Gastrocnemius medialis (tissue), 4 donors: ENCODE measurements at regions of chr11 and their contacts with region 1.

Region 1: GRCh38 chr11:18395735-18396504 is 1.6 kb downstream of the LDHA start:
- DNase-seq: peak; percentile 94 to 97
- ATAC-seq: peak; percentile 70 to 83
- H3K4me3 ChIP-seq: peak overlapping the region; percentile 67 to 86 (median 74)
- H3K27ac ChIP-seq: peak overlapping the region; percentile 85 to 94 (median 93)
- H3K4me1 ChIP-seq: peaks cover 15 to 23% of the 10 kb centered on the region in 2 donors
- H3K27me3 ChIP-seq: no peaks in the 10 kb centered on the region
- CTCF ChIP-seq: no peak
- POLR2A ChIP-seq: peak; percentile 65 to 73

Region 2: GRCh38 chr11:18304745-18305144 is 91.2 kb before region 1 on chr11:
- in situ Hi-C with region 1: no loop called
- intact Hi-C with region 1: no loop called
- DNase-seq: no peak
- ATAC-seq: no peak
- H3K4me3 ChIP-seq: no peak overlapping the region
- H3K27ac ChIP-seq: no peak overlapping the region
- H3K4me1 ChIP-seq: no peaks in the 10 kb centered on the region
- H3K27me3 ChIP-seq: no peaks in the 10 kb centered on the region
- CTCF ChIP-seq: no peak
- POLR2A ChIP-seq: no peak

Region 3: GRCh38 chr11:18314784-18315523 is 81.0 kb before region 1 on chr11:
- in situ Hi-C with region 1: loop called in 3 of 4 experiments (anchors 5 to 10 kb)
- intact Hi-C with region 1: no loop called
- DNase-seq: no peak
- ATAC-seq: no peak
- H3K4me3 ChIP-seq: no peak overlapping the region
- H3K27ac ChIP-seq: no peak overlapping the region
- H3K4me1 ChIP-seq: no peaks in the 10 kb centered on the region
- H3K27me3 ChIP-seq: no peaks in the 10 kb centered on the region
- CTCF ChIP-seq: no peak
- POLR2A ChIP-seq: no peak

Region 4: GRCh38 chr11:18383388-18384156 is 12.3 kb before region 1 on chr11:
- in situ Hi-C with region 1: no loop called
- intact Hi-C with region 1: loop called (anchors 2 kb)
- DNase-seq: peak; percentile 81 to 96
- ATAC-seq: peak; percentile 92 to 96
- H3K4me3 ChIP-seq: peak overlapping the region in 3 of 4 donors; percentile 6 to 32 (median 30)
- H3K27ac ChIP-seq: peak overlapping the region; percentile 90 to 100 (median 94)
- H3K4me1 ChIP-seq: peaks cover 29 to 30% of the 10 kb centered on the region in 2 donors
- H3K27me3 ChIP-seq: no peaks in the 10 kb centered on the region
- CTCF ChIP-seq: no peak
- POLR2A ChIP-seq: no peak

Region 5: DNA sequence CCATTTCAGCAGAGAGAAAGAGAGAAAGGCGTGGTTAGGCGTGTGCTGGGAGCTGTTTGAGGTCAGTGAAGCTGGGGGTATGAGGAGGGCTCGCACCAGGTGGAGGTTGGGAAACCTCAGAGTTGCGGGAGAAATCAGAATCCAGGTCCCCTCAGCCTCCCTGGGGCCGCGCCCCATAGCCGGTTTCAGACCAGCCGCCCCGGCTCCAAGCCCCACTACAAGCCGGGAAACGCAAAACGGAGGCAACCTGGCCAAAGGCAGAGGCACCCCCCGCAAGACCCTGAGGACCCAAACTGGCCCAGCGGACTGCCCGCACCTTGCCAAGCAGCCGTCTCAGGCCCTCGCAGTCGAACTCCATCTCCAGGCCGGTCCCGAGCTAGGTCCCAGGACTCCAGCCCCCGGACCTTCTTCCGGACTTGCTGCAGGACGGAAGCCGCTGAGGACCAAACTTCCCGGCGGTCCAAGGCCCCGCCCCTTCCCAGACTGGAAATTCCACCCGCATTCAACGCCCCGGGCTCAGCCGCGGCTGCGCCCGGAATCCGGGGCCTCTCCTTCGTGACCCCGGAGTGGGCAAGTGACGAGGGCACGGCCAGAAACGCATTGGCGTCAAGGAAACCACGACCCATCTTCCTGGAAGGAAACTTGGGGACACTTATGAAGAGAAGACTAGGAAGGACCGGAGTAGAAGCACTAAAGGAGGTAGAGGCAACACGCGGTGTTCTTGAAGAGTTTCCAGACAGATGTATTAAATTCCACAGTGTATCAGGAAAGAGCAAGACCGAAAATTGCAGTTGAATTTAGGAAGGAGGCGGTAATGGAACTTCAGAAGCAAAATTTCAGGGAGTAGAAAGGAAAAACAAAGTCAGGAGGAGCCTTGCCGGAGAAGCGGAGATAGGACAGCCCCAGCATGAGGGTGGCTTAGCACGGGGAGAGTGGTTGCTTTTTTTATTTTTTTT is 192.7 kb after region 1 on chr11 and contains the start of gene UEVLD:
- in situ Hi-C with region 1: no loop called
- intact Hi-C with region 1: loop called (anchors 2 kb)
- DNase-seq: peak; percentile 81 to 87
- ATAC-seq: peak; percentile 92 to 97
- H3K4me3 ChIP-seq: peak within 1 kb of the TSS; percentile 72 to 91 (median 80)
- H3K27ac ChIP-seq: peak within 1 kb of the TSS; percentile 86 to 91 (median 90)
- H3K4me1 ChIP-seq: peaks cover 41 to 42% of the 10 kb centered on the region in 2 donors
- H3K27me3 ChIP-seq: no peaks in the 10 kb centered on the region
- CTCF ChIP-seq: peak in 1 of 5 experiments; percentile 30
- POLR2A ChIP-seq: peak; percentile 63 to 78
- total RNA-seq, gene UEVLD: 27.4 to 58.8 (median 30.3) TPM

Region 6: DNA sequence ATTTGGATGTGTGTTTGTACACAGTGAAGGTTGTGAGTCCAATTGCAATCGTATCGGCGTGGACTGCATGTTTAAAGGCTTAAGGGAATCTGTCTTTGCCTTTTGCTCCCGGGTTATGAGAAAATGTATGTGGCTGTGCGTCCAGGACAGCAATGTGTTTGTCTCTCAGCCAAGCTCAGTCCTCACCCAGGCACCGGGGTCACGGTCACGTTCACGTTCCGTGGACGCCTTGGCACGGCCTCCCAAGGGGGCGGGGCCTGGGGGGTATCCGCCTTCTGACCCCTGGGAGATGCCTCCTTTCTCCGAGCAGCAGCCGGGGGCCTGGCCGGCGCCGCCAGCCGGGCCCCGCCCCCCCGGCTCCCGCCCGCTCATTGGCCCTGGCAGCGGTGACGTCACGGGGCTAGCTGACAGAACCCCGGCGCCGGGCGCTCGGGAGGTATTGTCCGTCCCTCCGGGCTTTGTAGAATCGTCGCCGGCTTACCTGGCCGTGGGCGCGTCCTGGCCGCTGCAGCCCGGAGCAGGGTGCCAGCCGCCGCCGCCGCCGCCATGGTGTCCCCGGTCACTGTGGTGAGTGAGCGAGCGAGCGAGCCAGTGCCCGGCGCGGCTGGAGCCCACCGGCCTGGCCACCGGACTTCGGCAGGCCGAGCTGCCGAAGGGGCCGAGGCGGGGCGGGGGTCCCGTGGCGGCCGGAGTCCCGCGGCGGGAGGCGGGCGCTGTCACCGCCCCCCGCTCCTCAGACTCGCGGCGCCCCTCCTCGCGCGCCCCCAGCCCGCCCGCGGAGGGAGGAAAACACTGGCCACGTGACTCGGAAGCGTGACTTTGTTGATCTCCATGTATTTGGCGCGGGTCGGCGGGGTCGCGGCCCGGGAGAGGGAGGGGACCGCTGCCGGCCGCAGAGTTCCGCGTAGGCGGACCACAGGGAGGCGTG is 302.7 kb after region 1 on chr11 and contains the start of gene TMEM86A:
- in situ Hi-C with region 1: no loop called
- intact Hi-C with region 1: loop called (anchors 1 kb)
- DNase-seq: peak; percentile 81 to 93
- ATAC-seq: peak; percentile 92 to 95
- H3K4me3 ChIP-seq: peak within 1 kb of the TSS; percentile 63 to 84 (median 78)
- H3K27ac ChIP-seq: peak within 1 kb of the TSS; percentile 77 to 88 (median 86)
- H3K4me1 ChIP-seq: peaks cover 8% of the 10 kb centered on the region in 2 donors
- H3K27me3 ChIP-seq: no peaks in the 10 kb centered on the region
- CTCF ChIP-seq: peak in 1 of 5 experiments; percentile 18
- POLR2A ChIP-seq: peak; percentile 84 to 94
- total RNA-seq, gene TMEM86A: 1.7 to 3.6 (median 2.8) TPM

Region 7: DNA sequence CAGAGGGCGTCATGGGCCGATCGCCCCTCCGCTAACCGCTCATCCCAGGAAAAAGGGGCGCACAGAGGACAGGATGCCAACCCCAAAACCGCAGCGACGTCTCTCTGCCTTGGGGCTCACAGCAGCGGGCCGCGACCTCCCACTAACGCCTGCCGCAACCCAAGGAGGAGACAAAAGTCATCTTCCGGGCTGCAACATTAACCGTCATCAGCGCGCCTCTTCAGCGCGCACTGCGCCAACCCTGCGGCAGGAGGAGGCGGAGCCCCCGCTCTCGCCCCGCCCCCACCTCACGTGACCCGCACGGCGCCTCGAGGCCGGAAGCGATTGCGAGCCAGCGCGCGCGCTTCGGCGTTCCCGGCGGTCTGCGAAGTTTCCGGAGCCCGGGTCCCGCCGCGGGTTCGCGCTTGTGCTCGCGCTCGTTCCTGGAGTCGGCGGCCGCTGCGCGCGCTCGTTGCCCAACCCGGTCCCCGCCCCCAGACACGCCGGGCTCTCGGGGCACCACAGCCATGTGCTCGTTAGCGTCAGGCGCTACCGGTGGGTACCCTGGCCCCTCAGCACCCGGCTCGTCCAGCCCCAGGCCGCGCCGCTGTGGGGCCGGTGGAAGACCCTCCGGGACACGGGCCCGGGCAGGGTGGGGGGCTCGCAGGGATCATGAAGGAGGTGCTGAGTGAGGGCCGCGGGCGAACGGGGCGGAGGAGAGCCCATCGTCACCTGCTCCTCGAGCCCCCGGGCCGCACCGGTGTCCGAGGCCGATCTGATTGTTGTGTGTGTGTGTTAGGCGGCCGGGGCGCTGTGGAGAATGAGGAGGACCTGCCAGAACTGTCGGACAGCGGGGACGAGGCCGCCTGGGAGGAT is 1991.5 kb after region 1 on chr11 and contains the start of gene PRMT3:
- in situ Hi-C with region 1: no loop called
- intact Hi-C with region 1: loop called (anchors 10 kb)
- DNase-seq: peak; percentile 90 to 92
- ATAC-seq: peak; percentile 95 to 96
- H3K4me3 ChIP-seq: peak within 1 kb of the TSS; percentile 87 to 96 (median 92)
- H3K27ac ChIP-seq: peak within 1 kb of the TSS; percentile 89 to 96 (median 94)
- H3K4me1 ChIP-seq: peaks cover 10 to 13% of the 10 kb centered on the region in 2 donors
- H3K27me3 ChIP-seq: no peaks in the 10 kb centered on the region
- CTCF ChIP-seq: peak; percentile 95 to 99 (median 98)
- POLR2A ChIP-seq: peak; percentile 73 to 77
- total RNA-seq, gene PRMT3: 14.0 to 20.1 (median 17.0) TPM